ENCODE measurements at regions of chr2 and their contacts with region 1.

Region 1: GRCh38 chr2:228657807-228658402 is 476.4 kb upstream of the SPHKAP start:
- DNase-seq: peak; percentile 76
- ATAC-seq: peak; percentile 33; the same call in 1 of the 2 replicates
- H3K4me3 ChIP-seq: peak overlapping the region; percentile 6; the same call in 1 of the 2 replicates
- H3K27ac ChIP-seq: no peak overlapping the region
- H3K4me1 ChIP-seq: peaks cover 33% of the 10 kb centered on the region
- H3K27me3 ChIP-seq: no peaks in the 10 kb centered on the region
- CTCF ChIP-seq: peak; percentile 79

Region 2: DNA sequence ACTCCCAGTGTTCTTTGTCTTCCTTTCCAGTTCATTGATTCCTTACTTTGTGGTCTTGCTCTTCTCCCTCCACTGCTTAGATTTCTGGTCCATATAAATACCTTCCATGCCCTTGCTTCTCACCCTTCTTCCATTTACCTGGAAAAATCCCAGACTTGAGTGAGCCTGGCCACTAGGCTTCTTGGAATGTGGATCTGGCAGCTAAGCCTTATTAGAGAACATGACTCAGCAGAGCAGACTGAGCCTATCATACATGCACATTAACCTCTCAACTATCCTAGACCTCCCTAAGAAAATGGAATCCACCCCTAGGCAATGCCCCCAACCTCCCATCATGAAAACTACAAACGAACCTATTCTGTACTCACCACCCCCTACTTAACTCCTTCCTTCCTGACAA is 1694.4 kb before region 1 on chr2:
- CTCF ChIA-PET with region 1: no interaction called
- POLR2A ChIA-PET with region 1: no interaction called
- intact Hi-C with region 1: no loop called
- DNase-seq: peak; percentile 71
- ATAC-seq: peak; percentile 64; the same call in 1 of the 2 replicates
- H3K4me3 ChIP-seq: no peak overlapping the region
- H3K27ac ChIP-seq: no peak overlapping the region
- H3K4me1 ChIP-seq: peaks cover 10% of the 10 kb centered on the region
- H3K27me3 ChIP-seq: no peaks in the 10 kb centered on the region
- CTCF ChIP-seq: no peak

Region 3: GRCh38 chr2:227939271-227940027 is 718.5 kb before region 1 on chr2:
- CTCF ChIA-PET with region 1: no interaction called
- POLR2A ChIA-PET with region 1: no interaction called
- intact Hi-C with region 1: loop called (anchors 5 kb)
- DNase-seq: peak; percentile 67
- ATAC-seq: peak; percentile 74; the same call in 1 of the 2 replicates
- H3K4me3 ChIP-seq: peak overlapping the region; percentile 40
- H3K27ac ChIP-seq: no peak overlapping the region
- H3K4me1 ChIP-seq: 0 out of 2 replicates have a peak, but pooled peaks cover 2% of the 10 kb centered on the region
- H3K27me3 ChIP-seq: no peaks in the 10 kb centered on the region
- CTCF ChIP-seq: peak; percentile 84

Region 4: DNA sequence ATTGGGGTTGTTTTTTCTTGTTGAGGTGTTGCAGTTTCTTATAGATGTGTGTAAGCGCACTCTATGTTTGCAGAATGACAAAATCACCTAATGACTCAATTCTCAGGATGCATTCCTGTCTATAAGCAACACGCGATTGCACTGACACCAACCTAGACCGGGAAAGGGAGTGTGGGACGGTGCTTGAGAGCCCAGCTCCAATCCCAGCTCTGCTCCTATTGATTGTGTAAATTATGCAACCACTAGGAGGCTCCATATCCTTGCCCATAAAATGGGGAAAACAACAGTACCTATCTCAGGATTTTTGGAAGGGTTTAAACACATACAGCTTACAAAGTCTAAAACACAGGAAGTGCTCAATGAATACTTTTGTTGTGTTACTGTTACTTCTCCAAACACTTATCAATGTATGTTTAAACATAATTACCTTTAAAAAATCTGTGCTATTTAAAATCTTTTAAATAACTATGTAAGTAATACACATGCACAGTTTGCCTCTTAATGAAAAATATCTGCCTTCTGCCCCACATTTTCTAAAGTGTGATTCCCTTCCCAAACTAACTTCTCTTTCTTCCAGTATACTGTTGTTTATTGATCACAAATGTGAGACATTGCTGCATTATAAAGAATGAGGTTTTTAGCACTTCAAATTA is 608.9 kb before region 1 on chr2:
- CTCF ChIA-PET with region 1: interaction called, 8 read pairs
- POLR2A ChIA-PET with region 1: no interaction called
- intact Hi-C with region 1: loop called (anchors 1 kb)
- DNase-seq: peak; percentile 95
- ATAC-seq: peak; percentile 99
- H3K4me3 ChIP-seq: no peak overlapping the region
- H3K27ac ChIP-seq: 0 out of 2 replicates have a peak overlapping the region, but pooled peaks have one; percentile 49
- H3K4me1 ChIP-seq: peaks cover 15% of the 10 kb centered on the region
- H3K27me3 ChIP-seq: no peaks in the 10 kb centered on the region
- CTCF ChIP-seq: peak; percentile 81

Region 5: GRCh38 chr2:228344531-228344930 is 313.4 kb before region 1 on chr2:
- CTCF ChIA-PET with region 1: no interaction called
- POLR2A ChIA-PET with region 1: no interaction called
- intact Hi-C with region 1: no loop called
- DNase-seq: no peak
- ATAC-seq: no peak
- H3K4me3 ChIP-seq: no peak overlapping the region
- H3K27ac ChIP-seq: no peak overlapping the region
- H3K4me1 ChIP-seq: no peaks in the 10 kb centered on the region
- H3K27me3 ChIP-seq: peaks cover 26% of the 10 kb centered on the region
- CTCF ChIP-seq: no peak

Region 6: DNA sequence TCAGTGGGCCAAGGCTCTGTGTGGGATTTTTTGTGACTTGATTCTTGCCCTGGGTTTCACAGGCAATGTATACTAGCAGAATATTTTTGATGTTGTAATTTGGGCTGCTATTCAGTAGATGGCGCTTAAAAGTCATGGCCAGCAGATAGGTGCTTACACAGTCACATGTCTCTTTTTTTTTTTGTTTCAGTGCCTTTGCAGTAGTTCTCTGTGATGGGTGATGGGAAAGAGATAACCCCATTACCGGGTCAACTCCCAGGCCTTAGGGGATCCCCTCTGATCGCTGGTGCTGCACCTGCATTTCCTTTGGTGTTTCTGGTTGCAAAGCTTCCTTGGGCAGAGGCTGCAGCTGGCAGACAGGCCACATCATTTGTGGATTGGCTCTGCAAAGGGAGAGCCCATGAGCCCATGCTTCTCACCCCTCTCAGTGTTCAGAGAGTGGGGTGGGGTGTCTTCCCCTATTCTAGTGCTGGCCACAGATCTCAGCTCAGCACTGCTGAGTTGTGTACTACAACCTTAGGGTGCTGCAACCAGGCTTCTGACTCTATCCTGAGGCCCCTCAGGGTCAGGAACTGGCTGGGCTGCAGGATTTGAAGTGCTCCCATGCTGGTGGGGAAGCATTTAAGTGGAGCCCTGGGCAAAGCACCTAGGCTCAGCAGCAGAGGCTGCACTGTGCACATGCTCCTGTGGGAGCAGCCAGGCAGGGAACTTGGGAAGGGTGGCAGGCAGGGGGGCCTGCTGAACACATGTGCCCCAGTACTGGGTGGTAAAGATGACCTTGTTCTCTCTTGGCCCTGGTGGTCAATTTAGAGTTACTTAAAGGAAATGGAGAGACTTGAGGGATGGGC is 256.6 kb before region 1 on chr2:
- CTCF ChIA-PET with region 1: interaction called, 3 read pairs
- POLR2A ChIA-PET with region 1: no interaction called
- intact Hi-C with region 1: loop called (anchors 1 kb)
- DNase-seq: peak; percentile 67
- ATAC-seq: peak; percentile 82
- H3K4me3 ChIP-seq: no peak overlapping the region
- H3K27ac ChIP-seq: no peak overlapping the region
- H3K4me1 ChIP-seq: no peaks in the 10 kb centered on the region
- H3K27me3 ChIP-seq: no peaks in the 10 kb centered on the region
- CTCF ChIP-seq: peak; percentile 87

Region 7: GRCh38 chr2:228545041-228545747 is 112.7 kb before region 1 on chr2:
- CTCF ChIA-PET with region 1: interaction called, 4 read pairs
- POLR2A ChIA-PET with region 1: no interaction called
- intact Hi-C with region 1: loop called (anchors 5 kb)
- DNase-seq: peak; percentile 87
- ATAC-seq: peak; percentile 80
- H3K4me3 ChIP-seq: no peak overlapping the region
- H3K27ac ChIP-seq: peak overlapping the region; percentile 57
- H3K4me1 ChIP-seq: peaks cover 49% of the 10 kb centered on the region
- H3K27me3 ChIP-seq: no peaks in the 10 kb centered on the region
- CTCF ChIP-seq: no peak

Region 8: DNA sequence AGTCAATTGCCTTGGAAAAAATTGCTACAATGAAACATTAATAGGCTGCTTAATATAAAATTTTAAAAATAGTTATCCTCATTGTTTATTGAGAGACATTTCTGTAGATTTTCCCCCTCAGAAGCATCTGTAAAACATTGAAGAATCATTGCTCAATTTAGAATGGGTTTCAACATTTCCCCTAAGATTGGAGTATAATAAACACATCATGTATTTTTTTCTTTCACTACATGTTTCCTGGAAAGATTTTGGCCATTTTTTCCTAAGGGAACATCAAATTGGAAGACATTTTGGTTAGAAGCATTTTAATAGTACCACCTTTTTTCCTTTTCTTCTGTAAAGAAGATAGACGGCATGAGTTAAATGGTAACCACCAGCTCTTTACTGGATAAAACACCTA is 33.2 kb before region 1 on chr2:
- CTCF ChIA-PET with region 1: no interaction called
- POLR2A ChIA-PET with region 1: no interaction called
- intact Hi-C with region 1: no loop called
- DNase-seq: no peak
- ATAC-seq: no peak
- H3K4me3 ChIP-seq: no peak overlapping the region
- H3K27ac ChIP-seq: no peak overlapping the region
- H3K4me1 ChIP-seq: no peaks in the 10 kb centered on the region
- H3K27me3 ChIP-seq: no peaks in the 10 kb centered on the region
- CTCF ChIP-seq: no peak

Region 9: DNA sequence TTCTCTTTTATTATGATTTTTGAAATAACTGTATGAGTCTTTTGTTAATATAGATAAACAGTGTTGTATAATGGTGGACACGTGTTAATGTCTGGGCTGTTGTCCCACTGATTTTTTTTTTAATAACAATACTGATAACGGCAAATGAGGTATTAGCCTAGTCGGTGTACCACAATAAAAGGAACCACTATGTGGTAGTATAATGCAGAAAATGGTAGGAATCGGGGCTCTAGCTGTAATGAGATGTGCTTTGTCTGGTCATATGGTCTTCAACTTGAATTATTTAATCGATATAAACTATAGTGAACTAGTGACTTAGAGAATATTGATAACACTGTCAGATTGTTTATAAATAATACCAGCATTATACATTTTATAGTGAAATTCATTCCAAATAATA is 41.5 kb after region 1 on chr2:
- CTCF ChIA-PET with region 1: no interaction called
- POLR2A ChIA-PET with region 1: no interaction called
- intact Hi-C with region 1: no loop called
- DNase-seq: peak; percentile 5
- ATAC-seq: peak; percentile 45; the same call in 1 of the 2 replicates
- H3K4me3 ChIP-seq: no peak overlapping the region
- H3K27ac ChIP-seq: no peak overlapping the region
- H3K4me1 ChIP-seq: peaks cover 19% of the 10 kb centered on the region
- H3K27me3 ChIP-seq: no peaks in the 10 kb centered on the region
- CTCF ChIP-seq: peak; percentile 47; the same call in 1 of the 2 replicates

Measured in PC-3 (cell line).